Dorsolateral prefrontal cortex (tissue), 120 donors: ENCODE measurements at regions of chr6 and their contacts with region 1.

Region 1: GRCh38 chr6:1604158-1605030 is 5.3 kb upstream of the FOXC1 start:
- DNase-seq: peak in 4 of 10 donors; percentile 42 to 81 (median 50)
- H3K4me3 ChIP-seq: peak overlapping the region; percentile 10 to 71 (median 50)
- H3K27ac ChIP-seq: peak overlapping the region in 50 of 59 donors; percentile 1 to 95 (median 76)
- H3K27me3 ChIP-seq: peaks cover 11 to 98% (median 80%) of the 10 kb centered on the region in 45 donors
- CTCF ChIP-seq: peak; percentile 60 to 99 (median 94)

Region 2: DNA sequence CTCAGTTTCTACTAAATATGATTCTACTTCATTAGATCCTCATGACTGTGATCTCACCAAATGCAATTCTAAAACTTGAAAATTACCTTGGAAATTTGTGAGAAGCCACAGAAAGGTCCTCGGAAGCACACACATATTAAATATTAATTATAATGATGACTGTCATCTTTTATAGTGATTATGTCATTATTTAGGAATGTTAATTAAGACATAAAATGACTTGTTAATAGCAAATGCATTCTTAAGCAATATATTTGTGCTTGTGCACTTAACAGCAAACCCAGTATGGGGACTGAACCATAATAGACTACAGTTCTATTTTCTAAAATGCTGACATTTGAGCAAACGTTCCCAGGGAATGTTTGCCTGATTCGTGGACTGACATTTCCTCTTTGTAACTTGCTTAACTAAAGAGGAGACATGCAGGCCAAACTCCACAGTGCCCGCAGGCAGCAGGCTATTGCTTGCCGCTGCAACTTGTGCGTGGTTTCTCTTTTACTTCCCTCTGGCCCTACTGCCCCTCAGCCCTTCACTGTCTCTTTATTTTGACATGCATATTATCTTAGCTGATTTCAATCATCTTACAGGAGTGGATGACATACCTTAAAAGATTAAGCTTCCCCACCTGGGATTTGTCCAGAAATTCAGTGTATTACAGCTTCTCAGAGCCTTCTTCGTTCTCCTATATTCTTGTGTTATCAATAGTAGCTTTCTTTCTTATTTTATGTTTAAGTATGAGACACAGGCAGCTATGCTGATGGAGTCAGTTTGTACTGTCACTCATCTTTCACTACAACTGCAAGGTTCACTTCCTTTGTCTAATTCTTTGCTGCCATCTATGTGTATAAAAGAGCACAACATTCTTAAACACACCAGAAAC is 499.5 kb after region 1 on chr6:
- intact Hi-C with region 1: loop called (anchors 2 to 5 kb)
- DNase-seq: no peak
- H3K4me3 ChIP-seq: peak overlapping the region in 44 of 59 donors; percentile 1 to 50 (median 24)
- H3K27ac ChIP-seq: peak overlapping the region in 44 of 59 donors; percentile 1 to 83 (median 64)
- H3K27me3 ChIP-seq: no peaks in the 10 kb centered on the region
- CTCF ChIP-seq: peak; percentile 30 to 80 (median 63)

Region 3: DNA sequence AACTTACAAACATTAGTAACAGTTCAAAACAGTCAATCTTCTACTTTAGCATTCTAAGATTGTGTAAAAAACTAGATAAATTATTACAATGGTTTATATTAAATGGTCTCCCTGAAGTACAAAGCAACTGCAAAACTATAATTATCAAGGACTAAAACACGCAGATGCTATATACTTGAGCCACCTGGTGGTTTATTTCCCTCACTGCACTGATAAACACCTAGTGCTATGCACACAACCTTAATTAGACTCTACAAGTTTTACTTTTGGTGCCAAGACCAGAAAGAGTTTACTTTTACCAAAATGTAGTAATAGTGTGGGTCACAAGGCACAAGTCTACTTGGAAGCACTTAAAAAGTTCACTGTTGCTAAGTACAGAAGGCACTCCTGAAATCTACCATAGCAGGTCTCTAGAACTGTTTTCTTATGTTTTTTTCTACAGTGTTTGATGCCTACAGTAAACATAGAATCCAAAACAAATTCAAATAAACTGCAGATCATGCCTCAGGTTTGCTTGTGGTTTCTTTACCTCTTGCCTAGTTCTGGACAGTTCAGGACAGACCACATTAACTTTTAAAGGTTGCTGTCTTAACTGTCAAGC is 591.8 kb after region 1 on chr6:
- intact Hi-C with region 1: loop called (anchors 2 to 5 kb)
- DNase-seq: no peak
- H3K4me3 ChIP-seq: no peak overlapping the region
- H3K27ac ChIP-seq: no peak overlapping the region
- H3K27me3 ChIP-seq: no peaks in the 10 kb centered on the region
- CTCF ChIP-seq: peak; percentile 48 to 86 (median 74)

Region 4: GRCh38 chr6:2245094-2245876 is 640.9 kb after region 1 on chr6 and contains the start of gene GMDS:
- intact Hi-C with region 1: loop called in 1 of 2 experiments (anchors 5 kb)
- DNase-seq: peak; percentile 64 to 92 (median 80)
- H3K4me3 ChIP-seq: peak within 1 kb of the TSS; percentile 62 to 99 (median 91)
- H3K27ac ChIP-seq: peak within 1 kb of the TSS in 55 of 59 donors; percentile 44 to 95 (median 76)
- H3K27me3 ChIP-seq: no peaks in the 10 kb centered on the region
- CTCF ChIP-seq: peak in 24 of 56 donors; percentile 8 to 46 (median 24)
- total RNA-seq, gene GMDS: 10.0 to 29.8 (median 16.5) TPM

Region 5: GRCh38 chr6:2353412-2354137 is 749.2 kb after region 1 on chr6:
- intact Hi-C with region 1: loop called (anchors 2 kb)
- DNase-seq: peak in 7 of 10 donors; percentile 45 to 75 (median 49)
- H3K4me3 ChIP-seq: peak overlapping the region in 1 of 59 donors; percentile 11
- H3K27ac ChIP-seq: peak overlapping the region in 2 of 59 donors; percentile 21 to 26
- H3K27me3 ChIP-seq: peaks cover 0 to 3% (median 0%) of the 10 kb centered on the region in 45 donors
- CTCF ChIP-seq: peak; percentile 52 to 93 (median 79)

Region 6: GRCh38 chr6:2448820-2449571 is 844.6 kb after region 1 on chr6:
- intact Hi-C with region 1: loop called (anchors 2 to 10 kb)
- DNase-seq: peak in 1 of 10 donors; percentile 19
- H3K4me3 ChIP-seq: peak overlapping the region in 46 of 59 donors; percentile 8 to 60 (median 34)
- H3K27ac ChIP-seq: no peak overlapping the region
- H3K27me3 ChIP-seq: peaks cover 0 to 2% (median 0%) of the 10 kb centered on the region in 45 donors
- CTCF ChIP-seq: peak; percentile 41 to 75 (median 65)

Region 7: DNA sequence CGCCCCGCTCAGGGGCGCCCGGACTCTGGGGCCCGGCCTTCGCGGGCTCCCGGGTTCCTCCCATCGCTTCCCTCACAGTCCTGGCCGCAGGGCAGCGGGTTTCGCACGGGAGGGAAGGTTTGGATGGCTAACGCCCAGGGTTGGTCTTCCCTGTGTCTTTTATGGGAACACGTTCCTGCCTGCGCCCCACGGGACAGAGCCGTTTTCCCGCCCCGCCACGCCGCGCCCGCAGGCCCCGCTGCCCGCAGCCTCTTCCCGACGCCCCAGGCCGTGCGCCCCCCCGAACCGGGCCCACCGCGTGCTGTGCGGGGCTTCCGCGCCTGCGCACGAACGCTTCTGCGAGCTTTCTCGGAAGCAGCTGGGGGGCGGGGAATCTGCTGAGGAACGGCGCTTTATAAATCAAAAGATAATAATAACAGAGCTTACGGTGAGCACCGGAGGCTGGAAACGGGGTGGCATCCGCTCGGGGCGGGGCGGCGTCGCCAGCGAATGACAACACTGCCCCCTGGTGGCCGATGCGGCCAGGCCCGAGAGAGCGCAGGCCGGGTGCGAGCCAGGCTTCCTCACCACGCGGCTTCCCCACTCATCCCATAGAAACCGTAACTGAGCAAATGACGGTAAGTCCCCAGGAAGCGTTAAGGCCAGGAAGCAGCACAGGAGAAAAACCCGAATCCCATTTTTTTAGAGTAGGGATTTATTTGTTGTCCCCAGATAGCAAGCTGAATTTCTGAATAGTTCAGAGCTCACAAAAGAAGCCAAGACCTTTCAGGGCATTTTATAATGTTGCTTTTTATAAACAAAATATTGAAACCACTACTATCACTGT is 1030.0 kb after region 1 on chr6:
- intact Hi-C with region 1: loop called in 1 of 2 experiments (anchors 5 kb)
- DNase-seq: peak; percentile 56 to 86 (median 76)
- H3K4me3 ChIP-seq: peak overlapping the region; percentile 33 to 74 (median 62)
- H3K27ac ChIP-seq: peak overlapping the region in 54 of 59 donors; percentile 12 to 89 (median 70)
- H3K27me3 ChIP-seq: peaks cover 0 to 12% (median 0%) of the 10 kb centered on the region in 45 donors
- CTCF ChIP-seq: peak; percentile 95 to 100 (median 99)